Activated B cell treated with CpG ODN at 0.5 μM for 24 hours (primary cell): ENCODE measurements at regions of chr19 and their contacts with region 1.

Region 1: GRCh38 chr19:35090506-35091237 is 25.0 kb upstream of the FXYD3 start:
- DNase-seq: no peak
- ATAC-seq: peak; percentile 65
- H3K4me3 Mint-ChIP-seq: peak overlapping the region; percentile 68
- H3K27ac Mint-ChIP-seq: no peak overlapping the region
- H3K4me1 Mint-ChIP-seq: peaks cover 45% of the 10 kb centered on the region
- H3K27me3 Mint-ChIP-seq: no peaks in the 10 kb centered on the region
- CTCF ChIP-seq: no peak

Region 2: DNA sequence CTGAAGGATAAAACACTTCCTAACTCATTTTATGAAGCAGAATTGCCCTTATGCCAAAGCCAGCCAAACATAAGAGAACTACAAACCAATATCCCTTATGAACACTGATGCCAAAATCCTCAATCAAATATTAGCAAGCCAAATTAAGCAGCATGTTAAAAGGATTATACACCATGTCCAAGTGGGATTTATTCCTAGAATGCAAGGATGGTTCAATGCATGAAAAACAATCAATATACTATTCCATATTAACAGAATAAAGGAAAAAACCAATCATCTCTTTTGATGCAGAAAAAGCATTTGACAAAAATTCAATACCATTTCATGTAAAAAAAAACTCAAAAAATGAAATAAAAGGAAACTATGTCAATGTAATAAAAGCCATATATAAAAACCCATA is 137.6 kb before region 1 on chr19:
- CTCF ChIA-PET with region 1: no interaction called
- POLR2A ChIA-PET with region 1: no interaction called
- intact Hi-C with region 1: no loop called
- DNase-seq: no peak
- ATAC-seq: no peak
- H3K4me3 Mint-ChIP-seq: no peak overlapping the region
- H3K27ac Mint-ChIP-seq: no peak overlapping the region
- H3K4me1 Mint-ChIP-seq: no peaks in the 10 kb centered on the region
- H3K27me3 Mint-ChIP-seq: no peaks in the 10 kb centered on the region
- CTCF ChIP-seq: no peak

Region 3: DNA sequence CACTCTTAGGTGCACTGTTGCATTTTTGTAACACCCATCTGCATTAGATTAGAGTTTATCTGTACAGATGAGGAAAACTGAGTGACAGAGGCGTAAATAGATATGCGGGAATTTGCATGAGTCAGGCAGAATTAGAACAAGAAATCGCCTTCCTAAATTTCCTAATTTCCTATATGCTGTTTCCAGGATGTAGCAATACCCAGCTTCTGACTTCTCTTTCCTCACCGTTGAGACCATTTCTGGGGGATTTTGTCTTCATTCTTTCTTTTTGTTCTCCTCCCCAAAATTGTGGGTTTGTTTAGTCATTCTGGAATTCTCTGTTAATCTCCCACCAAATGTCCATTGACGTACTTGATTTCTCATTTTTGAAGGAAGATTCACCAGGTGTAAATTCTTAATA is 116.0 kb before region 1 on chr19:
- CTCF ChIA-PET with region 1: interaction called, 3 read pairs
- POLR2A ChIA-PET with region 1: no interaction called
- intact Hi-C with region 1: loop called (anchors 1 kb)
- DNase-seq: no peak
- ATAC-seq: no peak
- H3K4me3 Mint-ChIP-seq: no peak overlapping the region
- H3K27ac Mint-ChIP-seq: no peak overlapping the region
- H3K4me1 Mint-ChIP-seq: peaks cover 5% of the 10 kb centered on the region
- H3K27me3 Mint-ChIP-seq: peaks cover 13% of the 10 kb centered on the region
- CTCF ChIP-seq: no peak

Region 4: DNA sequence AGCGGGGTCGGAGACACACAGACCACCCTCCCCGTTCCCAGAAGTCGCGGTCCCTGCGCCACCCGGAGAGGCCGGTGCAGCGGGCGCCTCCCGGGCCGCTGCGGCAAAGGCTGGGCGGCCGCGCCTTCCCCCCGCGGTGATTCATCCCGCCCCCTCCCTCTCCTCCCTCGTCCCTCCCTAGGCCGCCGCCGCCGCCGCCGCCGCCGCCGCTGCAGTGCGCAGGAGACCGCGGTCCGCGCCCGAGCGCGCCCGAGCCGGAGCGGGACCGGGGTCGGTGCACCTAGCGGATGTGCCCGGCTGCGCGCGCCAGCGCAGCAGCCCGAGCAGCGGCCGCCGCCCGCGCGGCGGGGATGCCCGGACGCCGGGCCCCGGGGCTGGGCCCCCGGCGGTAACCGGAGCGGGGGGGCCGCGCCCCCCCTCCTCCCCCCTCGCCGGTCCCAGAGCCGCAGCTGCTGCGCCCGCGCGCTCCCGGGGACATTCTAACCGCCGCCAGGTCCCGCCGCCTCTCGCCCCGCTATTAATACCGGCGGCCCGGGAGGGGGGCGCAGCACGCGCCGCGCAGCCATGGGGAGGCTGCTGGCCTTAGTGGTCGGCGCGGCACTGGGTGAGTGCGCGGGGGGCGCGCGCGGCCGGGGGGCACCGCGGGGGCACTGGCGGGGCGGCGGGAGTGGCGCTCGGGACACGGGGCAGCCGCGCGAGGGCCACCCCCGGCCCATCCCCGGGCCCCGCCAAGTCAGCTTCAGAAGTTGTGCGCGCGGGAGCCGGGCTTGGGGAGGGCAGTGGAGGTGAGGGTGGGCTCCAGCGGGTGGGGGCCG is 60.2 kb before region 1 on chr19 and contains the start of gene SCN1B:
- CTCF ChIA-PET with region 1: no interaction called
- POLR2A ChIA-PET with region 1: interaction called, 14 read pairs
- intact Hi-C with region 1: no loop called
- DNase-seq: no peak
- ATAC-seq: peak; percentile 59
- H3K4me3 Mint-ChIP-seq: peak within 1 kb of the TSS; percentile 72
- H3K27ac Mint-ChIP-seq: no peak within 1 kb of the TSS
- H3K4me1 Mint-ChIP-seq: peaks cover 5% of the 10 kb centered on the region
- H3K27me3 Mint-ChIP-seq: peaks cover 22% of the 10 kb centered on the region
- CTCF ChIP-seq: no peak
- total RNA-seq, gene SCN1B: 0.34 and 0.47 TPM in 2 replicates

Region 5: GRCh38 chr19:35037716-35038622 is 52.7 kb before region 1 on chr19:
- CTCF ChIA-PET with region 1: no interaction called
- POLR2A ChIA-PET with region 1: interaction called, 12 read pairs
- intact Hi-C with region 1: no loop called
- DNase-seq: no peak
- ATAC-seq: peak; percentile 79
- H3K4me3 Mint-ChIP-seq: peak overlapping the region; percentile 15
- H3K27ac Mint-ChIP-seq: peak overlapping the region; percentile 30
- H3K4me1 Mint-ChIP-seq: peaks cover 41% of the 10 kb centered on the region
- H3K27me3 Mint-ChIP-seq: peaks cover 6% of the 10 kb centered on the region
- CTCF ChIP-seq: no peak

Region 6: DNA sequence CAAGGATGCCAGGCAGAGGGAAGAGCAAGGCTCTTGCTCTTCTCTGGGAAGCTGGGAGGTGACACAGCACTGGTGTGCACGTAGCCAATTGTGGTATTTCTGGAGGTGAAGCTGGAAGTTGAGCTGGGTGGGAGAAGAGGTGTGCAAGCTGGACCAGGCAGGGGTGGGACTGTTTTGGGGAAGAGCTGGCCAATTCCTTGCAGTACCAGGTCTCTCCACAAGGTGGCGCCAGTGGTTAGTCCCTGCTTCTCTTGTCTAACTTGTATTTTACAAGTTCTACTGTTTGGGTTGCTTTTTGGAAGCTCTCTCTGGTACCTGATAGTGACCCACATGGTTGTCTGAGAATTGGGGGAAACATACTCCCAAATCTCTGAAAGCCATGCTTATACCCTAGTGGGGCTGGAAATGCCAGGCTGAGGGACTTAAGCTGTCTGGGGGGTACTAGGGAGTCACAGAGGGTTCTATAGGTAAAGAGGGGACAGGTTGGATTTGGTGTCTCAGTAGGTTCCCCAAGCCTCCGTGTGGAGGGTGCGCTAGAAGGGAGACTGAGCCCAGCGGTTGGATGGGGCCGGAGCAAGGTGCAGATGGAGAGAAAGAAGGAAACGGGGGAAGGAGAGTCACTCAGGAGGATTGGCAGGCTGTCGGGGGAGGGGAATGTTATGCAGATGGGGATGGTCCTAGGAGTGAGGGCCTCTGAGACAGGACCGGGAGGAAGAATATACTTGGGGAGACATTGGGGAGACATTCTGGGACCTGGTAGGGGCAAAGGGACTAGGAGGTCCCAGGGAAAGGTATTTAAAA is 46.2 kb before region 1 on chr19:
- CTCF ChIA-PET with region 1: interaction called, 4 read pairs
- POLR2A ChIA-PET with region 1: no interaction called
- intact Hi-C with region 1: loop called (anchors 1 kb)
- DNase-seq: peak; percentile 49
- ATAC-seq: no peak
- H3K4me3 Mint-ChIP-seq: no peak overlapping the region
- H3K27ac Mint-ChIP-seq: no peak overlapping the region
- H3K4me1 Mint-ChIP-seq: peaks cover 33% of the 10 kb centered on the region
- H3K27me3 Mint-ChIP-seq: peaks cover 3% of the 10 kb centered on the region
- CTCF ChIP-seq: peak; percentile 92

Region 7: DNA sequence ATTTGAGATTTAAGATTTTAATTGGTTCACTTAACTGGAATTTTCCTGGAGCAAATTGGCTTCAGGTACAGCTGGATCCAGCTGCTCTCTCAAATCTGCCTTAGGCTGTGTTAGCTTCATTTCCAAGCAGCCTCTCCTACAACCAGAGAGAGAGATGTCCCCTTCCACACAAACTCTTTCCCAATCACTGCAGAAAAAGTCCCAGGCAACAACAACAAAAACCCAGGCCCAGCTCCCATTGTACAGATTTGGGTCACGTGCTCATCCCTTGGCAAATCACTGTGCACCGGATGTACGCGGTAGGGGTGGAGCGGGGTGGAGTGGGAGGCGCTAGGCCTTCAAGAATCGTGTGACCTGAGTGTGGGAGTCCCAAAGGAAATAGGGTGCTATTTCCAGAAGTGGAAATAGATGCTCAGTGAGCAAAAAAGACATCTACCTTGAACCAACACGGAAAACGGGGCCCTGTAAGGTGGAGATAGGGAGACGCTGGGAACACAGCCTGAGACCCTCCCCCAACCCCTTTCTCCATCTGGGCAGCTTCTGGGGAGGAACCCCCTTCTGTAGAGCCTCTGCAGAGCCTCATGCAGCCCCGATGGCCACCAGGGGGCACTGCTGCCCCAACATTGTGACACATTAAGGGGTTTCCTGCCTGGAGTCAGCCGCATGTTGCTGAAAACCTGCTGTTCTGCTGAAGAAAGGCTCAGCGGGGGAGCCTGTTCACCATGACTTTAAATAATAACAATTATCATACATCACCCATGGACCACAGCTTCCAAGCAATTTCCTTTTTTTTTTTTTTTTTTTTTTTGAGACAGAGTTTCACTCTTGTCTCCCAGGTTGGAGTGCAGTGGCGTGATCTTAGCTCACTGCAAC is 23.7 kb before region 1 on chr19:
- CTCF ChIA-PET with region 1: interaction called, 52 read pairs
- POLR2A ChIA-PET with region 1: interaction called, 11 read pairs
- intact Hi-C with region 1: loop called (anchors 1 kb)
- DNase-seq: peak; percentile 88
- ATAC-seq: peak; percentile 91
- H3K4me3 Mint-ChIP-seq: peak overlapping the region; percentile 24
- H3K27ac Mint-ChIP-seq: peak overlapping the region; percentile 41
- H3K4me1 Mint-ChIP-seq: peaks cover 30% of the 10 kb centered on the region
- H3K27me3 Mint-ChIP-seq: no peaks in the 10 kb centered on the region
- CTCF ChIP-seq: no peak

Region 8: DNA sequence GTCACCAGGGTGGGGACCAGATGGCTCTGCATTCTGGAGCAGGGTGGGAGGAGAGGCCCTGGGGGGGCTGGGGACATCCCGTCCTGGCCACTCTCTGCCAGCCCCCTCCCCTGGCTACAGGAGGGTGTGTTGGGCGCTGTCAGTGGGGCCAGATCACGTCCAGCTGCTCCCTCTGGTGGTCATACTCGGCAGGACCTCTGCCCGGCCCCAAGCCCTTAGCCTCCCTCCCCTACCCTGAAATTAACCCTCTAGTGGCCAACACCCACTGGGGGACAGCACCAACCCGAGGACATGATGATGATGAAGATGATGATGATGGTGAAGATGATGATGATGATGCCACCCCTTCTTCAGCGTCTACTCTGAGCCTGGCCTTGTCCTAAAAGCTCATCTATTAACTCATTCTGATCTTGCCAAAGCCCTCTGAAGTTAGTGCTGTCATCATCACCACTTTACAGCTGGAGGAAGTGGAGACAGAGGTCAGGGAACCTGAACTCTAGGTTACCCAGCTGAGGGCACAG is 44.8 kb after region 1 on chr19:
- CTCF ChIA-PET with region 1: interaction called, 3 read pairs
- POLR2A ChIA-PET with region 1: interaction called, 5 read pairs
- intact Hi-C with region 1: loop called (anchors 1 kb)
- DNase-seq: peak; percentile 63
- ATAC-seq: peak; percentile 90
- H3K4me3 Mint-ChIP-seq: no peak overlapping the region
- H3K27ac Mint-ChIP-seq: no peak overlapping the region
- H3K4me1 Mint-ChIP-seq: peaks cover 15% of the 10 kb centered on the region
- H3K27me3 Mint-ChIP-seq: no peaks in the 10 kb centered on the region
- CTCF ChIP-seq: peak; percentile 75

Region 9: GRCh38 chr19:35154525-35155406 is 64.1 kb after region 1 on chr19 and contains the start of gene FXYD5:
- CTCF ChIA-PET with region 1: no interaction called
- POLR2A ChIA-PET with region 1: no interaction called
- intact Hi-C with region 1: no loop called
- DNase-seq: peak; percentile 55
- ATAC-seq: peak; percentile 77
- H3K4me3 Mint-ChIP-seq: peak within 1 kb of the TSS; percentile 99
- H3K27ac Mint-ChIP-seq: peak within 1 kb of the TSS; percentile 94
- H3K4me1 Mint-ChIP-seq: peaks cover 49% of the 10 kb centered on the region
- H3K27me3 Mint-ChIP-seq: no peaks in the 10 kb centered on the region
- CTCF ChIP-seq: no peak
- total RNA-seq, gene FXYD5: 103 and 125 TPM in 2 replicates

Region 10: DNA sequence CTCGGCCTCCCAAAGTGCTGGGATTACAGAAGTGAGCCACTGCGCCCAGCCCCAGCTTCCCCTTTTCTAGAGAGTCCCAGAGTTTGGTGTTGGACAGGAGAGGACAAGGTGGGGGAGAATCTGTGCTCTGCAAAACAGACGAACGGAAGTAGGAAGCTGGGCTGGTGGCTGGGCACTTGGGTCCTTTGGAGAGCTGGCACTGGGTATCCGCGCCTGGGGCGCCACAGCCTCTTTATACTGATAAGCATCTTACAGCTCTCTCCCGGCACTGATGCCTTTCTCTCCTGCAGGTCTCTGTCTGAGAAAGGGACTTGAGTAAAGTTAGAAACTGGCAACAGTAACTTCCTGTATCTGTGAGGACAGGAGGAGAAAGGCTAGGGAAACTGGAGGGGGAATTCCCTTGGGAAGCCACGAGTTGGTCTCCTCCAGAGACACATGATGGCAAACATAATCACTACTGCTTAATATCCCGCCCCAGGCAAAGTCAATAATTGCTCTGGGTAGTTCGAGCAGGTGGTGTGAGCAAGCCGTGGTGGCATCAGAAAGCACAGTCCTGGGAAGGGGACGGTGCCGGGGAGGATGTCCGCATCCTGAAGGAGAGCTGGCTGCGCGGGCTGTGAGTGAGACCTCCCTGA is 358.5 kb after region 1 on chr19:
- CTCF ChIA-PET with region 1: no interaction called
- POLR2A ChIA-PET with region 1: no interaction called
- intact Hi-C with region 1: no loop called
- DNase-seq: no peak
- ATAC-seq: no peak
- H3K4me3 Mint-ChIP-seq: no peak overlapping the region
- H3K27ac Mint-ChIP-seq: no peak overlapping the region
- H3K4me1 Mint-ChIP-seq: peaks cover 39% of the 10 kb centered on the region
- H3K27me3 Mint-ChIP-seq: peaks cover 2% of the 10 kb centered on the region
- CTCF ChIP-seq: no peak